Posterior vena cava (tissue), 2 donors: ENCODE measurements at regions of chr17 and their contacts with region 1.

Region 1: DNA sequence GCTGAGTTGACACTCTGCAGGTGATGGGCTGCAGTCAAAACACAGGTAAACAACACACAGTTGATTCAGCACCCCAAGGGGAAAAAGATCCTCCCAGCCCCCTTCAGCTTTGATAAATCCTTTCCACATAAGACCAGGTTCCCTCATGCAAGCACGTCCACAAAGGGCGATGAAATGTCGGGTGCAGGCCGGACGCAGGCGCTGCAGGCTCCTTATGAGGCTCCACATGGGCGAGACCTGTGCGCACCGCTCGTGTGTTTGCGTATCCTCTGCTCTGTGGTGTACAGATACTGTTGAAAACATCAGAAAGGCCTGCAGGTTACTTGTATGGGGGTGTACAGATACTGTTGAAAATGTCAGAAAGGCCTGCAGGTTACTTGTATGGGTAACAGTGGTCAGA is 14.4 kb upstream of the ZNF750 start:
- DNase-seq: peak; percentile 73

Region 2: DNA sequence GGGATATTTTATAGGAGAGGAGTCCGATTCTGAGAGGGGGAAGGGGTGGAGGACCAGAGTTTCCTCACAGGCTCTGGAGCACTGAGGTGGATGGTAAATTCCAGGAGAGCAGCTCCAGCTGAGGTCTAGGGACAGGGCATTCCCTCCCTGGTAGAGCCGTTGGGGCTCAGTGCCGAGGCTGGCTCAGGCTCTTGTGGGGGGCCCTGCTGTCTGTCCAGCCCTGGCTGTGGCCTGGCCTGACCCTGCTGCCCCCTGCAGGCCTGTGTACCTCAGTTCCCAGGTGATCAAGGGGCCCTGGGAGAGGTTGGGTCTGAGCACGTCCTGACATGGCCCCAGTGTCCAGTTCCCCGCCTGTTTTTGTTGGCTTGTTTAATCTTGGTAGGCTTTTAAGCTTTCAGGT is 31.2 kb before region 1 on chr17:
- intact Hi-C with region 1: loop called in 1 of 2 experiments (anchors 1 kb)
- DNase-seq: peak; percentile 80

Region 3: GRCh38 chr17:82917691-82918345 is 63.6 kb after region 1 on chr17:
- intact Hi-C with region 1: no loop called
- DNase-seq: no peak